MCF 10A (cell line): ENCODE measurements at regions of chr13 and their contacts with region 1.

Region 1: DNA sequence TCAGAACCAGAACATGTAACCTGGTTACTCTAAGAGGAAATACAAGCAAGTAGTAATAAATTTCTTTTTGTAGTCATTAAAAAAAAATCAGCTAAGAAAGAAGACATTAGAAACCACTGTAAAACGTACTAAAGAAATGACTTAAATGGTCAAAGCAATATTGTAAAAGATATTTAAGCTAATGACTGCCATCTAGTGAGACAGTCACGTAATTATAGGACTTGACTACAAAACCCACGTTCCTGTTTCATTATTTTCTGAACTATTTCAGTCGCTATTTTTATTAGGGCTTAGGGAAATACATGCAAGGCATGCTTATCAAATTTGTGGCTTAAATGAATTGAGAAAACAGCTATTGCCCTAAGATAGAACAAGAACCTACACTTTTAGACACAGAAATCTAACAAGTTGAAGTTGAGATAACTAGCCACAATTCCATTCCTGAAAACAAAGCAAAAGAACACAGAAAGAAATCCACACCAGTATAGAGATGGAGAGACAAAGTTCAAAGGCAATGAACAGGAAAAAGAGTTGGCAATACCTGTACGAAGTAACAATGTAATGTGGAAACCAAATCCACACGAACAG is 17.9 kb downstream of the ALG5 start:
- DNase-seq: peak; percentile 48
- H3K4me3 Mint-ChIP-seq: no peak overlapping the region
- H3K27ac Mint-ChIP-seq: no peak overlapping the region
- H3K4me1 Mint-ChIP-seq: no peaks in the 10 kb centered on the region
- H3K27me3 Mint-ChIP-seq: no peaks in the 10 kb centered on the region
- CTCF ChIP-seq: peak; percentile 52

Region 2: GRCh38 chr13:36850790-36851438 is 130.3 kb before region 1 on chr13:
- CTCF ChIA-PET with region 1: interaction called, 141 read pairs
- POLR2A ChIA-PET with region 1: no interaction called
- intact Hi-C with region 1: no loop called
- DNase-seq: peak; percentile 38
- H3K4me3 Mint-ChIP-seq: no peak overlapping the region
- H3K27ac Mint-ChIP-seq: no peak overlapping the region
- H3K4me1 Mint-ChIP-seq: no peaks in the 10 kb centered on the region
- H3K27me3 Mint-ChIP-seq: no peaks in the 10 kb centered on the region
- CTCF ChIP-seq: no peak

Region 3: GRCh38 chr13:36887758-36888521 is 93.3 kb before region 1 on chr13:
- CTCF ChIA-PET with region 1: interaction called, 10 read pairs
- POLR2A ChIA-PET with region 1: no interaction called
- intact Hi-C with region 1: no loop called
- DNase-seq: no peak
- H3K4me3 Mint-ChIP-seq: no peak overlapping the region
- H3K27ac Mint-ChIP-seq: no peak overlapping the region
- H3K4me1 Mint-ChIP-seq: no peaks in the 10 kb centered on the region
- H3K27me3 Mint-ChIP-seq: no peaks in the 10 kb centered on the region
- CTCF ChIP-seq: no peak

Region 4: DNA sequence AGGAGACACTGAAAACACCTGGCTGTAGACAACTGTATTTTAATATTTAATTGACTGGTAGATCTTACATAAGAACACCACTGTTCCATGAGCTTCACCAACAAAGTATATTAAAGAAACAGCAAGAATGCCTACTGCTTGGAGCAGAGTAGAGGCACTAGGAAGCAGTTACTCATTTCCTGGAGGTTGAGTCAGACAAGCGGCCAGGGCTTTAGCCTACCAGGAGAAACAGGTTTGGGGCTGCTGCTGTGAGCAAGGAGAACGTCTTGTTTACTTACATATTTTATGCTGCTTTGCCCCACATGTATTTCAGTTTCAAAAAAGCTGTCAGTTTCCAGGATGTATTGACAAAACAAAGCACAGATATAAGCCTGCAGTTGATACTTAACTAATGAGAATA is 15.5 kb before region 1 on chr13:
- CTCF ChIA-PET with region 1: interaction called, 17 read pairs
- POLR2A ChIA-PET with region 1: no interaction called
- intact Hi-C with region 1: no loop called
- DNase-seq: peak; percentile 84
- H3K4me3 Mint-ChIP-seq: no peak overlapping the region
- H3K27ac Mint-ChIP-seq: peak overlapping the region; percentile 88
- H3K4me1 Mint-ChIP-seq: peaks cover 8% of the 10 kb centered on the region
- H3K27me3 Mint-ChIP-seq: no peaks in the 10 kb centered on the region
- CTCF ChIP-seq: no peak